Activated naive CD4-positive, alpha-beta T cell treated with anti-CD3 and anti-CD28 coated beads for 36 hours (primary cell): ENCODE measurements at regions of chr5 and their contacts with region 1.

Region 1: GRCh38 chr5:152349683-152350526 is 55.2 kb downstream of the NMUR2 start:
- DNase-seq: peak; percentile 56
- H3K4me3 Mint-ChIP-seq: no peak overlapping the region
- H3K27ac Mint-ChIP-seq: no peak overlapping the region
- H3K4me1 Mint-ChIP-seq: no peaks in the 10 kb centered on the region
- H3K27me3 Mint-ChIP-seq: peaks cover 8% of the 10 kb centered on the region

Region 2: DNA sequence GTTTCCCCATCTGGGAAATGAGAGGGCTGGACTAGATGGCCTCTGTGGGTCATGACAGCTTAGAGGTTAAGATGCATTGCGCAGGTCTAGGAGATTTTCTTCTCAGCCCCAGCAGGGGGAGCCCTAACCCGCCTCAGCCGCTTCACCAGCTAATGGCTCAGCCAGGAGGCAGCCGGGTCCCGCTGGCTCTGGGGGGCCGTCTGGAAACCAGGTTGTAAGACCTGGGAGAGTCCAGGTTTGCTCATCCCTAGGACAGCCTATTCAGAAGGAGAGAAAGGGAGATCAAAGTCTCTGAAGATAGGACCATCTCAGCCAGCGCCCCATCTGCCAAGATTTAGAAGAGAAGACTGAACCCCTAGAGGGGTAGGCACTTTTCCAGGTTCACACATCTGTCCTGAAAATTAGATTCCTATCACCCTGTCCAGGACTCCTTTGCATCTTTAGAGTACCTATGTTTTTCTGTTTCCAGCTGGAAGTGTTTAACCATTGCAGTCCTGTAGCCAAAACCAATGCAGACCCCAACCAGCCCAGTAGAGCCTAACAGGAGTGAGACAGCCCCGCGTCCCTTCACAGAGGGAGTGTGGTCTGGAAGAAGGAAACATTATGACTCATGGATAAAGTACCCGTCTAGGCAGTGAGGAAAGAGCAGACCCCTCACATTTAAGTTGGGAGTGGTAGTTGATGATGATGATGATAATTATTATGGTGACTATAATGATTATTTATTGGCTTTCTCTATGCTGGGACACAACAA is 690.7 kb before region 1 on chr5:
- CTCF ChIA-PET with region 1: no interaction called
- intact Hi-C with region 1: loop called (anchors 1 kb)
- DNase-seq: peak; percentile 87
- H3K4me3 Mint-ChIP-seq: no peak overlapping the region
- H3K27ac Mint-ChIP-seq: no peak overlapping the region
- H3K4me1 Mint-ChIP-seq: peaks cover 17% of the 10 kb centered on the region
- H3K27me3 Mint-ChIP-seq: no peaks in the 10 kb centered on the region